Breast epithelium (tissue), 4 donors: ENCODE measurements at regions of chr4 and their contacts with region 1.

Region 1: DNA sequence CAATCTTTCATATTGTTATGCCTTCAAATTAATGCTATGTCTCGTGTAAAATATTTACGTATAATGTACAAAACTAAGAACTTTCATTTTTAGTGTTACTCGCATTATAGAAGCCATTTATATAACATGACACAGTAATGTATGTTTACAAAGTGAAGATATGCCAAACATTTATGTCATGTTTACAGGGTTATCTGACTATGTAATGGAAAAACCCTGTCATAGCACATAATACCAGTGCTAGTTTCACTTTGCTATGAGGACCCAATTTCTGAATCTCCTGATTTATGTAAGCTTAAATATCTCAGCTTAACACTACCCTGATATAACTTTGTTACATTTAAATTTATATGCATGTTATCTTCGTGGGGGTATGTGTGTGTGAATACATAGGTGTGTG is 233.1 kb downstream of the FAT4 start:
- DNase-seq: no peak
- H3K4me3 ChIP-seq: no peak overlapping the region
- H3K27ac ChIP-seq: no peak overlapping the region
- H3K4me1 ChIP-seq: no peaks in the 10 kb centered on the region
- H3K27me3 ChIP-seq: no peaks in the 10 kb centered on the region
- CTCF ChIP-seq: no peak
- POLR2A ChIP-seq: no peak

Region 2: GRCh38 chr4:125642645-125643044 is 94.8 kb after region 1 on chr4:
- intact Hi-C with region 1: loop called (anchors 5 kb)
- DNase-seq: no peak
- H3K4me3 ChIP-seq: no peak overlapping the region
- H3K27ac ChIP-seq: no peak overlapping the region
- H3K4me1 ChIP-seq: no peaks in the 10 kb centered on the region
- H3K27me3 ChIP-seq: no peaks in the 10 kb centered on the region
- CTCF ChIP-seq: no peak
- POLR2A ChIP-seq: no peak